ENCODE measurements at regions of chr18 and their contacts with region 1.

Region 1: GRCh38 chr18:7038330-7038851 is 79.2 kb downstream of the LAMA1 start:
- DNase-seq: peak; percentile 90
- ATAC-seq: peak; percentile 98
- H3K4me3 Mint-ChIP-seq: no peak overlapping the region
- H3K27ac Mint-ChIP-seq: peak overlapping the region; percentile 29
- H3K4me1 Mint-ChIP-seq: peaks cover 9% of the 10 kb centered on the region
- H3K27me3 Mint-ChIP-seq: no peaks in the 10 kb centered on the region
- CTCF ChIP-seq: peak; percentile 66

Region 2: DNA sequence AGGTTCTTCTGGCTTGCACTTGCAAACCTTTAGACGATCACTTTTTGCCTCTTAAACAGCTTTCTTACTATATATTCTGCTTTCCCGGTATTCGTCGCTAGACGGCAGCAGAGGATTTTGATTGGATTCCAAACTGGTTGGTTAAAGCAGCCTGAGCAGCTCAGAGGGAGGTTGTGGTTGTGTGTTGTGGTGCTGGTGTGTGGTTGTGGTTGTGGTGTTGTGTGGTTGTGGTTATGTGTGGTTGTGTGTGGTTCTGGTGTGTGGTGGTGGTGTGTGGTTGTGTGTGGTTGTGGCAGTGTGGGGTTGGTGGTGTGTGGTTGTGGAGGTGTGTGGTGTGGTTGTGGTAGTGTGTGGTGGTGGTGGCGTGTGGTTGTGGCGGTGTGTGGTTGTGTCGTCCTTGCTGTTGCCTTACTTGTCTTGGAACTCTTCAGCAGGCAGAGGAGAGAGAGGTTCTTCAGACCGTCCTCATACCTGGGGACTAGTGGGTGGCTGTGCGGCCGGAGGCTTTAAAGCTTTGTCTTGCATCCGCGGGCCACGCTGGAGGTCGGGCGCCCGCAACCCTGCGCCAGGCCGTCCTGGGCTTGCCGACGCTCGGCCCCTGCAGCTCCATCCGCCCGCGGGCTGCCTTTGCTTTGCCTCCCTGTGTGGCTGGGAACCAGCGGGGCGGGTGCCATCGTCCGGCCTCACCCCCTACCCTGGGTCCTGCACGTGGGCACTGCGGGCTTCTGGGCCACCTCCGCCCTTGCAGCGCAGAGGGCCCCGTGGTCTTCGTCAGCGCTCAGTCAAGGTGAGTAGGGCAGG is 118.1 kb before region 1 on chr18:
- CTCF ChIA-PET with region 1: interaction called, 12 read pairs
- POLR2A ChIA-PET with region 1: no interaction called
- DNase-seq: peak; percentile 78
- ATAC-seq: peak; percentile 74
- H3K4me3 Mint-ChIP-seq: no peak overlapping the region
- H3K27ac Mint-ChIP-seq: no peak overlapping the region
- H3K4me1 Mint-ChIP-seq: peaks cover 2% of the 10 kb centered on the region
- H3K27me3 Mint-ChIP-seq: no peaks in the 10 kb centered on the region
- CTCF ChIP-seq: peak; percentile 65

Region 3: DNA sequence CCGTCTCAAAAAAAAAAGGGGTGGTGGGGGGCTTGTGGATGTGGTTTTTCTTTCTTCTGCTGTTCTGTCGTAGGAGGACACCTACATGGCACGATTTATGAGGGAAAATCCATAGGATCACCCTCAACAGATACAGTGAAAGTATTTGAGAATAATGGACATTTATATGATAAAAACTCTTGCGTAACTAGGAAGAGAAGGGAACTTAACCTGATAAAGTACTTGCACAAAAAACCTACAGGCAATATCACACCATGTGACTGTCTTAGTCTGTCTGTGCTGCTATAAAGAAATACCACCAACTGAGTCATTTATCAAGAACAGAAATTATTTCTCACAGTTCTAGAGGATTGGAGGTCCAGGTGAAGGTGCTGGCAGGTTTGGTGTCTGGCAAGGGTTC is 101.0 kb after region 1 on chr18:
- CTCF ChIA-PET with region 1: no interaction called
- POLR2A ChIA-PET with region 1: no interaction called
- DNase-seq: no peak
- ATAC-seq: no peak
- H3K4me3 Mint-ChIP-seq: no peak overlapping the region
- H3K27ac Mint-ChIP-seq: no peak overlapping the region
- H3K4me1 Mint-ChIP-seq: no peaks in the 10 kb centered on the region
- H3K27me3 Mint-ChIP-seq: no peaks in the 10 kb centered on the region
- CTCF ChIP-seq: no peak

Region 4: GRCh38 chr18:7164323-7165004 is 126.1 kb after region 1 on chr18:
- CTCF ChIA-PET with region 1: interaction called, 14 read pairs
- POLR2A ChIA-PET with region 1: no interaction called
- DNase-seq: no peak
- ATAC-seq: peak; percentile 44; the same call in 1 of the 2 replicates
- H3K4me3 Mint-ChIP-seq: no peak overlapping the region
- H3K27ac Mint-ChIP-seq: no peak overlapping the region
- H3K4me1 Mint-ChIP-seq: peaks cover 10% of the 10 kb centered on the region
- H3K27me3 Mint-ChIP-seq: no peaks in the 10 kb centered on the region
- CTCF ChIP-seq: no peak

Region 5: GRCh38 chr18:7169601-7170000 is 131.2 kb after region 1 on chr18:
- CTCF ChIA-PET with region 1: interaction called, 41 read pairs
- POLR2A ChIA-PET with region 1: no interaction called
- DNase-seq: no peak
- ATAC-seq: no peak
- H3K4me3 Mint-ChIP-seq: no peak overlapping the region
- H3K27ac Mint-ChIP-seq: no peak overlapping the region
- H3K4me1 Mint-ChIP-seq: peaks cover 10% of the 10 kb centered on the region
- H3K27me3 Mint-ChIP-seq: no peaks in the 10 kb centered on the region
- CTCF ChIP-seq: no peak

Measured in WTC11 (cell line).